Calu3 (cell line): ENCODE measurements at regions of chr3 and their contacts with region 1.

Region 1: GRCh38 chr3:40690749-40691451 is 166.1 kb downstream of the ZNF621 start:
- DNase-seq: no peak
- H3K4me3 Mint-ChIP-seq: no peak overlapping the region
- H3K27ac Mint-ChIP-seq: no peak overlapping the region
- H3K4me1 Mint-ChIP-seq: no peaks in the 10 kb centered on the region
- H3K27me3 Mint-ChIP-seq: no peaks in the 10 kb centered on the region
- CTCF ChIP-seq: no peak

Region 2: GRCh38 chr3:40379674-40380306 is 311.1 kb before region 1 on chr3:
- CTCF ChIA-PET with region 1: no interaction called
- intact Hi-C with region 1: no loop called
- DNase-seq: no peak
- H3K4me3 Mint-ChIP-seq: no peak overlapping the region
- H3K27ac Mint-ChIP-seq: no peak overlapping the region
- H3K4me1 Mint-ChIP-seq: no peaks in the 10 kb centered on the region
- H3K27me3 Mint-ChIP-seq: no peaks in the 10 kb centered on the region
- CTCF ChIP-seq: no peak

Region 3: GRCh38 chr3:40780291-40780924 is 89.5 kb after region 1 on chr3:
- CTCF ChIA-PET with region 1: no interaction called
- intact Hi-C with region 1: no loop called
- DNase-seq: no peak
- H3K4me3 Mint-ChIP-seq: no peak overlapping the region
- H3K27ac Mint-ChIP-seq: no peak overlapping the region
- H3K4me1 Mint-ChIP-seq: no peaks in the 10 kb centered on the region
- H3K27me3 Mint-ChIP-seq: peaks cover 51% of the 10 kb centered on the region
- CTCF ChIP-seq: no peak

Region 4: DNA sequence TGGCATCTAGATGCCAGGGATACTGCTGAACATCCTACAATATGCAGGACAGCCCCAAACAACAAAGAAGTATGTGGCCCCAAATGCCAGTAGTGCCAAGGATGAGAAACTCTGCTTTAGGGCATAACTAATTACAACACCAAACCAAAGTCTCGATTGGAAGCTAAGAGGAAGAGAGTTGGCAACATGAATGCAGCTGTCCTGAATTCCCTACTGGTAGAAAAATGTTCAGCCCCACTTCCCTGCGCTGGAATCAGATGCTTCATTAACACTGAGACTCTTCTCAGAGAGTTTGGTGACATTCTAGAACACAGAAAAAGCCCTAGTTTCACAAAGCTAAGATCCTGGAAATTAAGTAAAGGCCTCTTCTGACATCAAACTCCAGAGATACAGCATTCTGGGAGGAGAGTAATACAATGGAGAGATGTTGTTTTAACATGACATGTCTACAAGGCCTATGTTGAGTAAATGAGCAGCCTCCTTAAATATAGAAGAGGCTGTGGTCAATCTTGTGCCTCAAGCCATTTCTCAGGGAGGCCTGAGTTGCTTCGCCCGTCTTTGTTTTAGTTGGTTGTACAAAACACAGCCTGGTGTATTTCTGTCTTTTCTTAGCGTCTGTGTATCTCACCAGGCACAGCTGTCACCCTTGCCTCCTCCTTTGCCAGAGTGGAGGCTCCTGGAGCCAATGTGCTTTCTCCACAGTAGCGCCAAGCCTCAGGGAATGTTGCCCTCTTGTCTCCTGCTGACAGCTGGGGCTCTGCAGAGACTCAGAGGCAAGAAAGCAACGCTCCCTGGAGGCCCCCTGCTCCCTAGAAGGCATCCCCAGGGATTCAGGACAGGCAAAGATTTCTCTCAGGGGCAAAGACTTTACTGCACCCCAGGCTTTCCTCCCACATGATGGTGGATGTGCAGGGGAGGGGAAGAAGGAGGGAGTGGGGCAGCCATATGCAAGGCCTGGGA is 483.3 kb after region 1 on chr3:
- CTCF ChIA-PET with region 1: interaction called, 10 read pairs
- intact Hi-C with region 1: no loop called
- DNase-seq: no peak
- H3K4me3 Mint-ChIP-seq: no peak overlapping the region
- H3K27ac Mint-ChIP-seq: no peak overlapping the region
- H3K4me1 Mint-ChIP-seq: no peaks in the 10 kb centered on the region
- H3K27me3 Mint-ChIP-seq: peaks cover 90% of the 10 kb centered on the region
- CTCF ChIP-seq: no peak